HepG2 (cell line): ENCODE measurements at regions of chr7 and their contacts with region 1.

Region 1: GRCh38 chr7:139340037-139340807 is 915 bp upstream of the FMC1 start:
- DNase-seq: peak; percentile 99
- ATAC-seq: peak; percentile 81
- H3K4me3 ChIP-seq: peak overlapping the region; percentile 83 to 97 (median 92)
- H3K27ac ChIP-seq: peak overlapping the region; percentile 100
- H3K4me1 ChIP-seq: peaks cover 26% of the 10 kb centered on the region
- H3K27me3 ChIP-seq: no peaks in the 10 kb centered on the region; a peak in 1 of 5 replicates
- CTCF ChIP-seq: peak; percentile 91
- EP300 ChIP-seq: peak in 1 of 2 experiments; percentile 29; a peak in 1 of 4 replicates
- POLR2A ChIP-seq: peak; percentile 65 to 68; a peak in 3 of 4 replicates
- RAD21 ChIP-seq: peak; percentile 51

Region 2: GRCh38 chr7:139109188-139109982 is 230.8 kb before region 1 on chr7 and contains the start of gene ZC3HAV1:
- CTCF ChIA-PET with region 1: no interaction called
- POLR2A ChIA-PET with region 1: no interaction called
- in situ Hi-C with region 1: no loop called
- intact Hi-C with region 1: loop called (anchors 10 kb)
- DNase-seq: peak; percentile 76
- ATAC-seq: peak; percentile 93
- H3K4me3 ChIP-seq: peak within 1 kb of the TSS; percentile 72 to 91 (median 80)
- H3K27ac ChIP-seq: peak within 1 kb of the TSS; percentile 91
- H3K4me1 ChIP-seq: peaks cover 70% of the 10 kb centered on the region
- H3K27me3 ChIP-seq: no peaks in the 10 kb centered on the region; a peak in 1 of 5 replicates
- CTCF ChIP-seq: no peak
- EP300 ChIP-seq: no peak
- POLR2A ChIP-seq: peak; percentile 59 to 62
- RAD21 ChIP-seq: no peak; the same call in none of the 2 replicates
- total RNA-seq, gene ZC3HAV1: 23.7 and 33.5 TPM in 2 replicates

Region 3: GRCh38 chr7:139299296-139299695 is 40.9 kb before region 1 on chr7:
- CTCF ChIA-PET with region 1: no interaction called
- POLR2A ChIA-PET with region 1: interaction called, 3 read pairs
- in situ Hi-C with region 1: no loop called
- intact Hi-C with region 1: loop called (anchors 1 kb)
- DNase-seq: peak; percentile 43
- ATAC-seq: peak; percentile 75
- H3K4me3 ChIP-seq: no peak overlapping the region; a peak in 1 of 6 replicates
- H3K27ac ChIP-seq: peak overlapping the region; percentile 24
- H3K4me1 ChIP-seq: peaks cover 72% of the 10 kb centered on the region
- H3K27me3 ChIP-seq: no peaks in the 10 kb centered on the region
- CTCF ChIP-seq: no peak
- EP300 ChIP-seq: peak in 1 of 2 experiments; percentile 28; a peak in 2 of 4 replicates
- POLR2A ChIP-seq: no peak
- RAD21 ChIP-seq: no peak

Region 4: DNA sequence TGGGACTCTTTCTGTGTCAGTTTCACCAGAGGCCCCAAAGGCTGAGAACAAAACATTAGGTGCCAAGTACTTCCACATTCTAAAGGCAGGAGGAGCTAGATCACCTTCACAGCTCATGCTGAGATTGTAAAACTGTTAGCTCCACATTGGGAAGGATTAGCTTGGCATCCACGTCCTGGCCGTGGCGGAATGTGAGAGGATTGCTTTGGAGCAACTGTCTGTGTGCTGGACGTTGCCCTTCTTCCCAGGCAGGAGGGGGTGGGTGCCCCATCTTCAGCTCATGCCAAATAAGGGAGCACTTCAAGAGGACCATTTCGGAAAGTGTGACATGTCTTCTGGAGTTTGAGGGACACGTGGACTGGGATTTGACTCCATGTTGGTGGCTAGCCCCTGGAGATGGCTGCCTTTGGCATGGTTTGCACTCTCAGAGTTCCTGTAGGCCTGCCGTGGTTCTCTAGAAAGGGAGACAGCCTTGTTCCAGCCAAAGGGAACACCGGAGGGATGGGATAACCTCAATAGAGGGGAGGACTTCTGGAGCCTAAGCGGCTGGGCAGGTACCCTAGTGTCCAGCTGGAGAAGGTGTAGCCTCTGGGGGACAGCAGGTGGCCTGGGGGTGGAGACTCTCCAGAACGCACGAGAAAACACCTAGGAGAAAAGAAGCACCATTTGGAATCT is 19.0 kb before region 1 on chr7:
- CTCF ChIA-PET with region 1: no interaction called
- POLR2A ChIA-PET with region 1: interaction called, 11 read pairs
- in situ Hi-C with region 1: no loop called
- intact Hi-C with region 1: no loop called
- DNase-seq: peak; percentile 56
- ATAC-seq: peak; percentile 89
- H3K4me3 ChIP-seq: peak overlapping the region; percentile 0 to 57 (median 38); a peak in 5 of 6 replicates
- H3K27ac ChIP-seq: no peak overlapping the region
- H3K4me1 ChIP-seq: peaks cover 24% of the 10 kb centered on the region
- H3K27me3 ChIP-seq: no peaks in the 10 kb centered on the region
- CTCF ChIP-seq: peak; percentile 54
- EP300 ChIP-seq: no peak
- POLR2A ChIP-seq: no peak
- RAD21 ChIP-seq: peak; percentile 47; the same call in 1 of the 2 replicates

Region 5: DNA sequence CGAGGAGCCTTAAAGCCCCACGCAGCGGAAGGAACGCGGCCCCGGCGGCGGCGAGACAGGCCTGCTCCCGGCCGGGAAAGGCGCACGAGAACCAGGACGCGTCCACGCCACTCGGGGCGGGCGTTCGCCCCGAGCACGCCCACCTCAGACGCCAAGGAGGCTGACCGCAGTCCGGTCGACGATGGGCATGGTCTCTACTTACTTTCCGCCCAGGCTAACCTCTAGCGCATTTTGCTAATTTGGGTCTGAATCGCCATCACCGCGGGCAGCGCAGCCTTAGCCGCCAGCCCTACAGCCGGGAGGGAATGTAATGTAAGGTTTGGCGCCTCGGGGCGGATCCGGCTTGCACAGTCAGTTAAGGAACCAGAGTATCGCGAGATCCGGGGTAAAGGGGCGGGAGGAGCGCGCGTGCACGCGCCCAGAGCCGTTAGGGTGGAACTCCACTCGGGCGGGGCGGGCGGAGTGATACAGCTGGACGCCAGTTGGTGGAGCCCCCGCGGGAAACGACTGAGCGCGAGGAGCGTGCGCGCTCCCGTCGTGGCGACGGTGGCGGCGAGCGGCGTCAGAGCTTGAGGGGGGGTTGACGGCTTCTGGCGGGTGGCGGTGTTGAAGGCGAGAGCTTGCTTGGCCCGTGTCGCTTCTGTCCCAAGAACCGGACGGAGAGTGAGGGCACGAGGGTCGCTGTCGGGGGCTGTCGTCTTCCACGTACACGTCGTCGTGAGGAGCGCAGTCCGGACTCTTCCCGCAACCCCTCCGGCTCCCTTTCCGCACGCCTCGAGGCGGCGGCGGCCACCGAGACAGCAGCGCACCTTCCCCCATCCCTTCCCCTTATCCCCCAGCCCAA is 19.4 kb after region 1 on chr7 and contains the start of gene LUC7L2:
- CTCF ChIA-PET with region 1: no interaction called
- POLR2A ChIA-PET with region 1: interaction called, 30 read pairs
- in situ Hi-C with region 1: no loop called
- intact Hi-C with region 1: loop called (anchors 1 kb)
- DNase-seq: peak; percentile 95
- ATAC-seq: peak; percentile 84
- H3K4me3 ChIP-seq: peak within 1 kb of the TSS; percentile 70 to 97 (median 89)
- H3K27ac ChIP-seq: peak within 1 kb of the TSS; percentile 99
- H3K4me1 ChIP-seq: peaks cover 30% of the 10 kb centered on the region
- H3K27me3 ChIP-seq: no peaks in the 10 kb centered on the region
- CTCF ChIP-seq: peak; percentile 48
- EP300 ChIP-seq: peak in 1 of 2 experiments; percentile 42; a peak in 1 of 4 replicates
- POLR2A ChIP-seq: peak; percentile 93 to 98
- RAD21 ChIP-seq: peak; percentile 6; the same call in 1 of the 2 replicates
- total RNA-seq, gene LUC7L2: 50.7 and 59.5 TPM in 2 replicates

Region 6: GRCh38 chr7:139687980-139688632 is 347.9 kb after region 1 on chr7:
- CTCF ChIA-PET with region 1: no interaction called
- POLR2A ChIA-PET with region 1: no interaction called
- in situ Hi-C with region 1: no loop called
- intact Hi-C with region 1: no loop called
- DNase-seq: no peak
- ATAC-seq: no peak
- H3K4me3 ChIP-seq: no peak overlapping the region
- H3K27ac ChIP-seq: no peak overlapping the region
- H3K4me1 ChIP-seq: peaks cover 21% of the 10 kb centered on the region
- H3K27me3 ChIP-seq: no peaks in the 10 kb centered on the region
- CTCF ChIP-seq: no peak
- EP300 ChIP-seq: no peak
- POLR2A ChIP-seq: no peak
- RAD21 ChIP-seq: no peak